Activated T-helper 1 cell treated with anti-CD3 and anti-CD28 coated beads, Interleukin-12 subunit alpha, Interleukin-12 subunit beta, Interleukin-2, Interleukin-4 antibody, amounts not matched to agents 30 ng/mL and 10 ng/mL and 1 ng/mL, durations not matched to agents 14 hours and 24 hours and 36 hours (primary cell): ENCODE measurements at regions of chr6 and their contacts with region 1.

Region 1: GRCh38 chr6:77492530-77492929 is 29.2 kb upstream of the HTR1B start:
- DNase-seq: no peak
- H3K4me3 Mint-ChIP-seq: no peak overlapping the region
- H3K27ac Mint-ChIP-seq: no peak overlapping the region
- H3K4me1 Mint-ChIP-seq: no peaks in the 10 kb centered on the region
- H3K27me3 Mint-ChIP-seq: no peaks in the 10 kb centered on the region

Region 2: DNA sequence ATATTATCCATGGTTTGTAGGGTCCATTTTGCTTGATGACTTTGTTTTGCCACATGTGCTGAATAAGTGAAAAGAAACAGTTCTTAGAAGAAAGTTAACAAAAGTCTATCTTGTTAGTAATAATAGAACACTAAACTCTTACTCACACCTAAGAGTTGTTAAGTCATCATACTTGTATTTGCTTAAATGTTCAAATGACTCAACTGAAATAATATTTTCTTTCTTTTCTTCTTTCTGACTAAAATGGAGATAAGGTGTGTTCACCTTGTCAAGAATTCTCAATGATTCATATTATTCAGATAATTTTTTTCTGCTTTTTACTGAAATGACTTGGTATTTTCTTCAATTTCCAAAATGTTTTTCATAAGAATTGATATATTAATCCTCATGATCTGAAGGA is 356.4 kb before region 1 on chr6:
- intact Hi-C with region 1: no loop called
- DNase-seq: no peak
- H3K4me3 Mint-ChIP-seq: no peak overlapping the region
- H3K27ac Mint-ChIP-seq: no peak overlapping the region
- H3K4me1 Mint-ChIP-seq: no peaks in the 10 kb centered on the region
- H3K27me3 Mint-ChIP-seq: no peaks in the 10 kb centered on the region

Region 3: GRCh38 chr6:77373955-77374354 is 118.6 kb before region 1 on chr6:
- intact Hi-C with region 1: no loop called
- DNase-seq: no peak
- H3K4me3 Mint-ChIP-seq: no peak overlapping the region
- H3K27ac Mint-ChIP-seq: no peak overlapping the region
- H3K4me1 Mint-ChIP-seq: no peaks in the 10 kb centered on the region
- H3K27me3 Mint-ChIP-seq: no peaks in the 10 kb centered on the region

Region 4: GRCh38 chr6:77397561-77397960 is 95.0 kb before region 1 on chr6:
- intact Hi-C with region 1: no loop called
- DNase-seq: no peak
- H3K4me3 Mint-ChIP-seq: no peak overlapping the region
- H3K27ac Mint-ChIP-seq: no peak overlapping the region
- H3K4me1 Mint-ChIP-seq: no peaks in the 10 kb centered on the region
- H3K27me3 Mint-ChIP-seq: no peaks in the 10 kb centered on the region

Region 5: GRCh38 chr6:77445214-77445613 is 47.3 kb before region 1 on chr6:
- intact Hi-C with region 1: loop called (anchors 1 kb)
- DNase-seq: no peak
- H3K4me3 Mint-ChIP-seq: no peak overlapping the region
- H3K27ac Mint-ChIP-seq: no peak overlapping the region
- H3K4me1 Mint-ChIP-seq: no peaks in the 10 kb centered on the region
- H3K27me3 Mint-ChIP-seq: no peaks in the 10 kb centered on the region